B cell (primary cell): ENCODE measurements at regions of chr1 and their contacts with region 1.

Region 1: DNA sequence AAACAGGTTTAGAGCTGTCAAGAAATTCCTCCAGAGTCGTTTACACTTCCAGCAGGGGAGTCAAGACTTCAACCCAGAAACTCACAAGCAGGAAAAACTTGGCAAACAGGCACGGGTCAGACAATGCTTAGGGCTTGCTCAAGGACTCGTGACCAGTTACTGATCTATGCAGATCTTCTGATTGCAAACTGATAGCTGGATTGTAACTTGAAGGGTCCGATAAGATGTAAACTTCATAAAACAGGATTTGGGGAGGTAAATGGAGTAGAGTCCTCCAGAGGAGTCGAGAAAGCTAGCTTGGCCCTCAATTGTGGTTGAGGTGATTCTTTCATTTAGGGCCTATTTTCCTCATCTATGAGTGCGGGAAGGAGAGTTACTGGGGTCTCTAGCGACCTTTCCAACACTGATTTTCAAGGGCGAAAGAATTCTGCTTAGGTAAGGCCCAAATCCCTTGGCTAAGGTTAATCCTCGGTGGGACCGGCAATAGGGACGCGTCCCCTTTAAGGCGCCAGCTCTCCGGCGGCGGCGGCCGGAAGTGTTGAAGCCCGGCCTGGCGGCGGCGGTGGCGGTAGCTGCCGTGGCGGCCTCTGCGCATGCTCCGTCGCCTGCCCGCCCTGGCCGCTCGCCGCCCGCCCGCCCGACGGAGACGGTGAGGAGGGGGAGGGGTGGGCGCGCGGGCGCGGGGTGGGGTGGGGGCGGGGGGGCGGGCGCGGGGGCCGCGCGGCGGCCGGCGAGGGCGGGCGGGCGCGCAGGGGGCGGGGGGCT is at the start of gene GMEB1:
- DNase-seq: peak; percentile 88
- ATAC-seq: peak; percentile 65
- H3K4me3 ChIP-seq: peak within 1 kb of the TSS; percentile 68 to 95 (median 94)
- H3K4me3 Mint-ChIP-seq: peak within 1 kb of the TSS; percentile 94
- H3K27ac ChIP-seq: peak within 1 kb of the TSS; percentile 95 to 98
- H3K27ac Mint-ChIP-seq: peak within 1 kb of the TSS; percentile 99
- H3K4me1 ChIP-seq: peaks cover 5 to 24% of the 10 kb centered on the region in 2 donors
- H3K4me1 Mint-ChIP-seq: peaks cover 19% of the 10 kb centered on the region
- H3K27me3 ChIP-seq: no peaks in the 10 kb centered on the region
- H3K27me3 Mint-ChIP-seq: no peaks in the 10 kb centered on the region
- CTCF ChIP-seq: no peak
- total RNA-seq, gene GMEB1: 21.7 and 24.8 TPM in 2 replicates

Region 2: DNA sequence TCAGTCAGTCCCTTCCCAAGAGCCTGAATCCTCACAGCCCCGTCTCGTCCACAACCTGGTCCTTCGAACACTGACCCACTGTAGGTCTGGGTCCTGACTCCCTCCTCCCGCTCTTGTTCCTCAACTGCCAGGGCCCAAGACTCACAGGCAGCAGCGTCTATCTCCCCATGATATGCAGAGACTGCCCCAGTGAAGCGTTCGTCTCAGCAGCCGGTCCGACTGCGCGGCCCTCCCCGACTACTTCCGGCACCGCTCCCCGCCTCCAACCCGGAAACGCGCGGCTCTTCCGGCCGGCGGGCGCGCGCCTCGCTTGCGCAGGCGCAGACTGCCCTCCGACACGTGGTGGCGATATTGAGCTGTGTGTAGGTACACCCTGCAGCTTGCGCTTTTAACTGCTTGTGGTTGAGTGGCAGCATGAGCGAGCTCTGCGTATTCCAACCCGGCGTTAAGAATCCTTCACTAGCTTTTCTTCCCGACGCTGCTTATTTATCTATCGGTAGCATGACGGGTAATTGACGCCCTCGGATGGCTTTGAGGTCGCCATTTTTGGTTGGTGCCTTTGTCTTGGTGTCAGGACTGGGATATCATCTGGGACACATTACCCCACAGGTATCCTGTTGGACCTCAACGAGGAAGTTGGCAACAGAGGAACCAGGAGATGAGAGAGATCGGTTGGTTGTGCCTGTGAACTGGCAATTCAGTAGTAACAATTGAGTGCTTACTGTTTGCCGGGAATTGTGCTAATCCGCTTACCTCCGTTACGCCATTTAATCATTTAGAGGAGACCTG is 25.3 kb before region 1 on chr1 and contains the start of gene TAF12:
- CTCF ChIA-PET with region 1: interaction called, 23 read pairs
- POLR2A ChIA-PET with region 1: interaction called, 67 read pairs
- intact Hi-C with region 1: loop called (anchors 1 kb)
- DNase-seq: peak; percentile 97
- ATAC-seq: peak; percentile 84
- H3K4me3 ChIP-seq: peak within 1 kb of the TSS; percentile 67 to 91 (median 89)
- H3K4me3 Mint-ChIP-seq: peak within 1 kb of the TSS; percentile 100
- H3K27ac ChIP-seq: peak within 1 kb of the TSS; percentile 97 to 100
- H3K27ac Mint-ChIP-seq: peak within 1 kb of the TSS; percentile 99
- H3K4me1 ChIP-seq: peaks cover 29 to 31% of the 10 kb centered on the region in 2 donors
- H3K4me1 Mint-ChIP-seq: peaks cover 49% of the 10 kb centered on the region
- H3K27me3 ChIP-seq: no peaks in the 10 kb centered on the region
- H3K27me3 Mint-ChIP-seq: no peaks in the 10 kb centered on the region
- CTCF ChIP-seq: peak; percentile 54
- total RNA-seq, gene TAF12: 18.5 and 19.1 TPM in 2 replicates

Region 3: GRCh38 chr1:28648474-28649198 is 19.7 kb before region 1 on chr1 and contains the start of gene RNU11:
- CTCF ChIA-PET with region 1: interaction called, 23 read pairs
- POLR2A ChIA-PET with region 1: interaction called, 67 read pairs
- intact Hi-C with region 1: loop called (anchors 1 kb)
- DNase-seq: peak; percentile 98
- ATAC-seq: peak; percentile 72
- H3K4me3 ChIP-seq: peak within 1 kb of the TSS; percentile 9 to 60 (median 53)
- H3K4me3 Mint-ChIP-seq: peak within 1 kb of the TSS; percentile 94
- H3K27ac ChIP-seq: peak within 1 kb of the TSS; percentile 93 to 100
- H3K27ac Mint-ChIP-seq: peak within 1 kb of the TSS; percentile 100
- H3K4me1 ChIP-seq: peaks cover 25 to 33% of the 10 kb centered on the region in 2 donors
- H3K4me1 Mint-ChIP-seq: peaks cover 32% of the 10 kb centered on the region
- H3K27me3 ChIP-seq: no peaks in the 10 kb centered on the region
- H3K27me3 Mint-ChIP-seq: no peaks in the 10 kb centered on the region
- CTCF ChIP-seq: no peak
- total RNA-seq, gene RNU11: not detected in 2 replicates